ENCODE measurements at regions of chr11 and their contacts with region 1.

Region 1: GRCh38 chr11:64900263-64900678 is 16.7 kb downstream of the ATG2A start:
- DNase-seq: peak; percentile 76 to 96 (median 78)
- H3K4me3 ChIP-seq: no peak overlapping the region
- H3K4me3 Mint-ChIP-seq: peak overlapping the region in 7 of 8 donors; percentile 25 to 84 (median 75)
- H3K27ac ChIP-seq: peak overlapping the region; percentile 76
- H3K27ac Mint-ChIP-seq: peak overlapping the region; percentile 79 to 99 (median 95)
- H3K4me1 ChIP-seq: peaks cover 21% of the 10 kb centered on the region
- H3K4me1 Mint-ChIP-seq: peaks cover 12 to 30% (median 18%) of the 10 kb centered on the region in 4 donors
- H3K27me3 ChIP-seq: no peaks in the 10 kb centered on the region
- H3K27me3 Mint-ChIP-seq: no peaks in the 10 kb centered on the region

Region 2: DNA sequence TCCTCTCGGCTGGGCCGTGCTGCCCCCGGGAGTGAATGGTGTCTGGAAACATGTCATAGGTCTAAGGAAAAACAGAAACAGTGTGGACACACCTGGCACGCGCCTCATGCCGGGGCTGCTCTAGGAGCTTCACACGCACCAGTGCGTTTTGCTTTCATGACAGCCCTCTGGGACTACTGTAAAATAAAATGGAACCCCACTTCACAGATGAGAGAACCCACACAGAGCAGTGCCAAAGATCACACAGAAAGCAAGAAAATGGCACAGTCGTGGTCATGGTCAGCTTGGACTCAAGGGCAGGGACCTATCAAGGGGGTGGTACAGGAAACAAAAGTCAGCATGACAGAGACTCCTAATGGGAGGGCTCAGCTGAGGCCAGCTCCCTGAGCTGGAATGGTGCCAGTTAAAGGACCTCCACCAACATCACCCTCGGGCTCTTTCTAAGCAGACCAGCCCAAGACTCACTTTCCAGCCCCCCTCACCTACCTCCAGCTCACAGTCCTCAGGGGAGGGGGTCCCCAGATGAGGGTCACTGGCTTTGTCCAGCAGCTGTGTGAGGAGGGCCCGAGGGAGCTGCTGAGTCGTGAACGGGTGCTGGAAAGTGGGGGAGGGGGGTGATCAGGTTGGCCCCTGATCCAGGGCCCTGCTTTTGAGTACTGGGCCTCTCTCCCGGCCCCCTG is 100.5 kb before region 1 on chr11:
- CTCF ChIA-PET with region 1: no interaction called
- POLR2A ChIA-PET with region 1: no interaction called
- intact Hi-C with region 1: no loop called
- DNase-seq: no peak
- H3K4me3 ChIP-seq: no peak overlapping the region
- H3K4me3 Mint-ChIP-seq: peak overlapping the region in 4 of 8 donors; percentile 15 to 64 (median 46)
- H3K27ac ChIP-seq: no peak overlapping the region
- H3K27ac Mint-ChIP-seq: peak overlapping the region in 5 of 7 donors; percentile 18 to 83 (median 64)
- H3K4me1 ChIP-seq: peaks cover 35% of the 10 kb centered on the region
- H3K4me1 Mint-ChIP-seq: peaks cover 10 to 41% (median 24%) of the 10 kb centered on the region in 4 donors
- H3K27me3 ChIP-seq: no peaks in the 10 kb centered on the region
- H3K27me3 Mint-ChIP-seq: no peaks in the 10 kb centered on the region

Region 3: DNA sequence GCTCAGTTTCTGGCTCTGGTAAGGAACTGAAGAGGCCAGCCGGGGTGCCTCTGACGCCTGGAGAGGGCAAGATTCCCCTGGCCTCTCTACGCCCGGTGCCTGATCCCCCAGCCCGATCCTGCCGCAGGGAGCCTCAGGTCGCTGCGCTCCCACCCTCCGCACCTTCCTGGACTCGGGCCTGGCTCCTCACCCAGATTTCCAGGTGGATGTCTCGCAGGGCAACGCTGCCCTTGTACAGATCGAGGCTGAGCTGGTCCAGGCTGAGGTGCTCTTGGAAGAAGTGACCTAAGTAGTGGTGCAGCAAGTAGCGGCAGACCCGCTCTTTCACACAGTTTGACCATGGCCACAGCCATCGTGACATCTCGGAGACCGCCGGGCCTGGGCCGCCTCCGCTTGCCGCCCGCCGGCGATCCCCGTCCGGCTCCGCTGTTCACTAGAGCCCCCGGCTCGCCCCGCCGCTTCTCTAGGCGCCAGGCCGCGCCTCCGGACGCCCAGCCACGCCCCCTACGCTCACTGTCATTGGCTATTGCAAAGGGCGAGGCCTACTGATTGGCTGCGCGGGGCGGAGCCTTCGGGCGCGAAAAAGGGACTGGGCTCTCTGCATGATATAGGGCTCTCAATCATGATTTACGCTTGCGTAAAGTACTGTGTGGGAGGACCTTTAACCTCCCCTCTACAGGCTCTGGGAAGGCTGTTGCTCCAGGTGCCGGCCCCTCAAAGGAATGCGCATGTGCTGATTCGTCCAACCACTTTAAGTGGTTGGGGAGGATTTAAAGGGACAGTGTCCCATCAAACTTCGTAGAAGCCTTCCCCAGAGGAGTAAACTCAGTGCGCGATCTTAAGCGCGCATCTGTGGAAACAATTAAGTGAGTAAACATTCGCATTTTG is 16.7 kb after region 1 on chr11 and contains the start of gene ATG2A:
- CTCF ChIA-PET with region 1: no interaction called
- POLR2A ChIA-PET with region 1: interaction called, 5 read pairs
- intact Hi-C with region 1: loop called (anchors 1 kb)
- DNase-seq: peak; percentile 98 to 99 (median 99)
- H3K4me3 ChIP-seq: peak within 1 kb of the TSS; percentile 94 to 97
- H3K4me3 Mint-ChIP-seq: peak within 1 kb of the TSS; percentile 91 to 96 (median 93)
- H3K27ac ChIP-seq: peak within 1 kb of the TSS; percentile 88
- H3K27ac Mint-ChIP-seq: peak within 1 kb of the TSS; percentile 93 to 97 (median 96)
- H3K4me1 ChIP-seq: peaks cover 27% of the 10 kb centered on the region
- H3K4me1 Mint-ChIP-seq: peaks cover 15 to 28% (median 23%) of the 10 kb centered on the region in 4 donors
- H3K27me3 ChIP-seq: no peaks in the 10 kb centered on the region
- H3K27me3 Mint-ChIP-seq: no peaks in the 10 kb centered on the region
- total RNA-seq, gene ATG2A: 45.7 to 47.3 TPM